Calu3 (cell line): ENCODE measurements at regions of chr5 and their contacts with region 1.

Region 1: DNA sequence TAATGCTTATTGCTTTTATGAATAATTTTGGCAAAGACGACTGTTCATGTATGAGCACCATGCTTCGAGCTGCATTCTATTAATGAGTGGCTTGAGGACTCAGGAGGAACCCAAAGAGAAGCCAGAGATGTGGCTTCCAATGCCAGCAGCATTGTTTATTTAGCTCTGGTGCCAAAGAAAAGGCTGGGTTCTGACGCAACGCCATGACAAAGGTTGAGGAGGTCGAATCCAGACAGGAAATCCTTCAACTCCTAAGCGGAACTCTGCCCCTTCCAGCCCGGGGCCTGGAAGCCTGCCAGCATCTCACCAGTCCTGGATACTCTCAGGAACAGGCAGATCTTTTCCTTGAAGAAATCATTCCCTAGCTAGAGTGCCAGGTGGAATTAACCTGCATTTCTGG is 104.4 kb downstream of the ARHGAP26 start:
- DNase-seq: peak; percentile 92
- H3K4me3 Mint-ChIP-seq: peak overlapping the region; percentile 15
- H3K27ac Mint-ChIP-seq: peak overlapping the region; percentile 98
- H3K4me1 Mint-ChIP-seq: peaks cover 94% of the 10 kb centered on the region
- H3K27me3 Mint-ChIP-seq: no peaks in the 10 kb centered on the region
- CTCF ChIP-seq: no peak

Region 2: GRCh38 chr5:142713121-142713706 is 161.3 kb before region 1 on chr5:
- CTCF ChIA-PET with region 1: interaction called, 31 read pairs
- intact Hi-C with region 1: no loop called
- DNase-seq: peak; percentile 96
- H3K4me3 Mint-ChIP-seq: peak overlapping the region; percentile 80
- H3K27ac Mint-ChIP-seq: peak overlapping the region; percentile 63
- H3K4me1 Mint-ChIP-seq: peaks cover 23% of the 10 kb centered on the region
- H3K27me3 Mint-ChIP-seq: no peaks in the 10 kb centered on the region
- CTCF ChIP-seq: peak; percentile 99

Region 3: GRCh38 chr5:142748568-142749249 is 125.8 kb before region 1 on chr5:
- CTCF ChIA-PET with region 1: interaction called, 28 read pairs
- intact Hi-C with region 1: no loop called
- DNase-seq: peak; percentile 71
- H3K4me3 Mint-ChIP-seq: no peak overlapping the region
- H3K27ac Mint-ChIP-seq: peak overlapping the region; percentile 87
- H3K4me1 Mint-ChIP-seq: peaks cover 44% of the 10 kb centered on the region
- H3K27me3 Mint-ChIP-seq: no peaks in the 10 kb centered on the region
- CTCF ChIP-seq: peak; percentile 78

Region 4: DNA sequence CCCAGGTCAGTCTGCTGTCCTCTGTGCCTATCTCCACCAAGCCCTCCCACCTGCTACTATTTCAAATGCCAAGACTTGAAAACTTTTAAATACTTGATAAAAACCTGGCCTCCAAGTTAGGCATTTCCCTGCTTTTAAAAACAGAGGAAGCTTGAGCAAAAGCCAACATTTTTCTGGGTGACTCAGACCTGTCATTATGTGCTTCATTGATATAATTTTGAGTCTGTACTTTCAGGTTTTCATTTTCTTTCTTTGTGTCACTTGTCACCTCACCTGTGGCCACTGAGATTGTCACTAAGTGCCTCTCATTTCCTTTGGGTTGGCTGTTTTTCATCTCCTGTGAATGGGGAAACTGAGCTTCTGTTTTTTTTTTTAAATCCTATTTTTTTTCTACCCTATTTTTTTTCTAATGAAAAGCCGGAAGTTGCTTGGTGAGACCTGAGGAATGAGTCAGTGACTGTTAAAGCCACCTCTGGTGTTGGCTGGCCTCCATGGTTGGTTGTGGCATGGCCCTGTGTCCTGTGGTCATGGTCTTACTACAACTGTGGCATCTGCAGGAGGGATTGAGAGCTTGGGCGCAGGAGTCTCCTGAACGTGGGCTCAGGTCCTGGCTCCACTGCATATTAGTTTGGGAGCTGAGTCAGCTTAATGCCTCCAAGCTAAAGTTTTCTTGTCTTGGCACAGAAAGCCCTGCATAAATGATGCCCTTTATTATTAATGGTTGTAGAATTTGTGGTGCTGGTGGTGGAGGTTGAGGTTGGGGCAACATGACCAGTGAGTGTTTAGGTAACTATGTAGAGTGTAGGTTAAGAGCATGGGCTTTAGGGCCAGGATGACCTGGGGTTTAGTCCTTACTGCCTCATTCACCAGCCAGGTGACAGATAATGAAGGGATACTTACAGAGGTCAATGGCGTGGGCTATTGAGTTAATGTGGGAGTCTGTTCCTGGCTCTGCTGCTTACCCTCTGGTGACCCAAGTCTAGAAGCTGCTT is 47.5 kb before region 1 on chr5:
- CTCF ChIA-PET with region 1: interaction called, 14 read pairs
- intact Hi-C with region 1: loop called (anchors 2 kb)
- DNase-seq: peak; percentile 79
- H3K4me3 Mint-ChIP-seq: peak overlapping the region; percentile 69
- H3K27ac Mint-ChIP-seq: peak overlapping the region; percentile 87
- H3K4me1 Mint-ChIP-seq: peaks cover 95% of the 10 kb centered on the region
- H3K27me3 Mint-ChIP-seq: no peaks in the 10 kb centered on the region
- CTCF ChIP-seq: no peak

Region 5: DNA sequence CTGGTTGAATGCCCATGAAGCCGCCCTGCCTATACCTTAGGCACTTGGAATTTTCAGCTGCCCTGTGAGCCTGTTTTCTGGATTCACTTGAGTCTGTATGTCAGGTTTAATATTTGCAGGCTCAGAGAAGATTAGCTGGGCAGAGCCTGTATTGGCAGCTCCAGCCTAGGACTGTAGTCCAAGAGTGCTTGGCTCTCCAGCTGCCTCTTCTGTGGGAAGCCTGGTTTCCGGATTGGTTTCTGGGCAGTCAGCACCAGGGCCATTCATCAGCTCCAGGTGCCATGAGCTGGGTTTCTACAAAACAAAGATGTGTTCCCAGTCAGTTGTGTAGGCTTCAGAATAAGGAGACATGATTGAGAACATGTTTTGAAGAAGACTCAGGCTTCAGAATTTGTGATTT is 14.3 kb before region 1 on chr5:
- CTCF ChIA-PET with region 1: interaction called, 10 read pairs
- intact Hi-C with region 1: no loop called
- DNase-seq: no peak
- H3K4me3 Mint-ChIP-seq: no peak overlapping the region
- H3K27ac Mint-ChIP-seq: no peak overlapping the region
- H3K4me1 Mint-ChIP-seq: peaks cover 91% of the 10 kb centered on the region
- H3K27me3 Mint-ChIP-seq: no peaks in the 10 kb centered on the region
- CTCF ChIP-seq: no peak